Left cardiac atrium (tissue), 4 donors: ENCODE measurements at regions of chr1 and their contacts with region 1.

Region 1: GRCh38 chr1:205325334-205325884 is 3.9 kb upstream of the NUAK2 start:
- DNase-seq: no peak
- ATAC-seq: peak in 1 of 2 donors; percentile 10

Region 2: GRCh38 chr1:205273551-205273982 is 51.8 kb before region 1 on chr1:
- intact Hi-C with region 1: loop called (anchors 1 to 2 kb)
- DNase-seq: peak; percentile 85
- ATAC-seq: peak; percentile 73 to 80

Region 3: DNA sequence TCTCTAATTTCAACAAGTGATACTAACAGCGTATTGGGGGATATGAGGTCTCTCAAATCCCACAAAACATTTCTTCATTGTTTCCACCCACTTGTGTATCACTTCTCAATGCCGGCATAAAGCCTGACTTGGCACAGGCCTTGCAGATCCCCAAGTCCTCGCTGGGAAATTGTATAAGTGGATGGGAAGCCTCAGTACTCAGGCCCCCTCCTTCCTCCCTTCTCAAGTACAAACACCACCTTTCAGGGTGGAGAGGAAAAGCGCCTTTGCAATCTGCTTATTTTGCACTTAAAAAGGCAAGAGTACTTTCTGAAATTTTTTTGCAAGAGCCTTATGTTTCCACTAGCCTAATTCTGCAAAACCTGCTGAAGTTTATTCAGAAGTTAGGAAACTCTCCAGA is 57.2 kb after region 1 on chr1:
- intact Hi-C with region 1: no loop called
- DNase-seq: no peak
- ATAC-seq: no peak